ENCODE measurements at regions of chr1 and their contacts with region 1.

Region 1: DNA sequence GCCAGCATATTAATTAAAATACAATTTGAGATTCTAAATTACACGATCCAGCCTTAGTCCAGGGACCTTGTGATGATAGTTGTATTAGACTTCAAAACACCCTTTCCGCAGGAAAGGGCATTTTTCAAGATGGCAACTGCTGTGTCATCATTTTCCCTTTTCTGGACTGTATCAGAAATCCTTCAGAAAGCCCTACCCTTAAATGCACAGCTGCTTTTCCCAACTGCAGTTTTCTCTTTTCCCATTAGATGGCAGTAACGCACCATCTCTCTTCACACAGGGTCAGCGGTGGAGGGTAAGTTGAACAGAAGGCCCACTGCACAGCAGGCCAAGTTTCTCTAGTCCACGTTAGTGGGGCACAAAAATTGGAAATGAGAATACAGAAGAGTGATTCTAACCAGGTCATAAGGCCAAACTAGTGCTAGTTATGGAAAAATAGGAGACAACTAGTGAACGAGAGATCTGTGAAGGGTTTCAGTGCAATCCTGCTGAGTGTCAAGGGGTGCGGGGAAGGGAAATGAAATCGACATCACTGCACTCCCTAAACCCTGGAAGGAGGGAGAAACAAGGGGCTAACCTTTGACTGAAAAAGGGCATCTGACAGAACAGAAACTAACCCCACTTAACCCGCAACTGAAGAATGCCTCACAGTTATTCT is 22.1 kb upstream of the TDRD10 start:
- DNase-seq: peak; percentile 66 to 86
- H3K4me3 ChIP-seq: no peak overlapping the region
- H3K4me3 Mint-ChIP-seq: no peak overlapping the region
- H3K27ac Mint-ChIP-seq: no peak overlapping the region
- H3K4me1 ChIP-seq: no peaks in the 10 kb centered on the region
- H3K4me1 Mint-ChIP-seq: no peaks in the 10 kb centered on the region
- H3K27me3 ChIP-seq: no peaks in the 10 kb centered on the region
- H3K27me3 Mint-ChIP-seq: no peaks in the 10 kb centered on the region
- CTCF ChIP-seq: peak; percentile 78 to 85

Region 2: DNA sequence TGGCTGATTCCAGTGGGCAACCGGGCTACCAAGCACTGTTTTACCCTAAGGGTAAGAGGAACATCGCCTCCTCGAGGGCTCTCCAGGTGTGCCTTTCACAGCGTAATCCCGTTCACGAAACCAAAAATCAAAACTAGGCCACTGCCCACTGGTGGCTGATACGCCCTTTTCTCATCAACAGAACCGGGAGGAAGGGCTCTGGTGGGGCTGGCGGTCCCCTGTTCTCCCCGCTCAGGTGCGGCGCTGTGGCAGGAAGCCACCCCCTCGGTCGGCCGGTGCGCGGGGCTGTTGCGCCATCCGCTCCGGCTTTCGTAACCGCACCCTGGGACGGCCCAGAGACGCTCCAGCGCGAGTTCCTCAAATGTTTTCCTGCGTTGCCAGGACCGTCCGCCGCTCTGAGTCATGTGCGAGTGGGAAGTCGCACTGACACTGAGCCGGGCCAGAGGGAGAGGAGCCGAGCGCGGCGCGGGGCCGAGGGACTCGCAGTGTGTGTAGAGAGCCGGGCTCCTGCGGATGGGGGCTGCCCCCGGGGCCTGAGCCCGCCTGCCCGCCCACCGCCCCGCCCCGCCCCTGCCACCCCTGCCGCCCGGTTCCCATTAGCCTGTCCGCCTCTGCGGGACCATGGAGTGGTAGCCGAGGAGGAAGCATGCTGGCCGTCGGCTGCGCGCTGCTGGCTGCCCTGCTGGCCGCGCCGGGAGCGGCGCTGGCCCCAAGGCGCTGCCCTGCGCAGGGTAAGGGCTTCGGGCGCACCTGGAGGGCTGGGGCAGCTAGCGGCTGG is 74.7 kb before region 1 on chr1 and contains the start of gene IL6R:
- CTCF ChIA-PET with region 1: interaction called, 7 read pairs
- POLR2A ChIA-PET with region 1: no interaction called
- intact Hi-C with region 1: loop called (anchors 1 kb)
- DNase-seq: peak; percentile 81 to 87
- H3K4me3 ChIP-seq: peak within 1 kb of the TSS; percentile 61
- H3K4me3 Mint-ChIP-seq: peak within 1 kb of the TSS; percentile 85
- H3K27ac Mint-ChIP-seq: peak within 1 kb of the TSS; percentile 79
- H3K4me1 ChIP-seq: peaks cover 14% of the 10 kb centered on the region
- H3K4me1 Mint-ChIP-seq: no peaks in the 10 kb centered on the region
- H3K27me3 ChIP-seq: no peaks in the 10 kb centered on the region
- H3K27me3 Mint-ChIP-seq: no peaks in the 10 kb centered on the region
- CTCF ChIP-seq: peak in 1 of 2 experiments; percentile 68
- total RNA-seq, gene IL6R: 4.9 and 5.8 TPM in 2 replicates

Region 3: DNA sequence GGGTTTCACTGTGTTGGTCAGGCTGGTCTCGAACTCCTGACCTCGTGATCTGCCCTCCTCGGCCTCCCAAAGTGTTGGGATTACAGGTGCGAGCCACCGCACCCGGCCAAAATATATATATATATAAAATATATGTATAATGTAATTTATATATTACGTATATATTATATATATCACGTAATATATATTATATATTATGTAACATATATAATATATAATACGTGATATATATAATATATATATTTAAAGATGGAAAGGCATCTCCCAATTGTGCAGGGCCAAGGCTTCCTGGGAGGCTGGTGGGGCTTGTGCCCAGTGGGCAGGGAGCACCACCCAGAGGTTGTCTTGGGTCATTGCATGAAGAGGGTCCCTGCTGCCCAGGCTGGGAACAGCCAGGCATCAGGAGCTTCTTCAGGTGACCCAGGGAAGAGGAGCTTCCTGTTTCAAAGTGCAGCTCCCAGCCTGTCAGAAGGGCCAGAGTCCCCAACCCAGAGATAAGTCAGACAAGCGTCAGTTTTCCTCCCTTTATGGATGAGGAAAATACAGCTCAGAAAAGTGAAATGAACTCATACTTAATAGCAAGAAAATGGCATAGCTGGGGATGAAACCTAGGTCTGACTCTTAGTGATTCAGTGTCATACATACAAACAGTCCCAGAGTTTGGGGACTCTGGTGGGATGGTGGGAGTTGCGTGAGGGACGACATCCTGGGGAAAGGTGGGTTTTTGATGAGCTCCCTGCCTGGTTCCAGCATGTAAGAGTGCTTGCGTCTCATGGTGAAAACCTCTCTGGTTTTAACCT is 66.6 kb after region 1 on chr1:
- CTCF ChIA-PET with region 1: interaction called, 44 read pairs
- POLR2A ChIA-PET with region 1: no interaction called
- intact Hi-C with region 1: loop called (anchors 1 kb)
- DNase-seq: peak; percentile 73 to 80
- H3K4me3 ChIP-seq: no peak overlapping the region
- H3K4me3 Mint-ChIP-seq: no peak overlapping the region
- H3K27ac Mint-ChIP-seq: no peak overlapping the region
- H3K4me1 ChIP-seq: no peaks in the 10 kb centered on the region
- H3K4me1 Mint-ChIP-seq: peaks cover 9% of the 10 kb centered on the region
- H3K27me3 ChIP-seq: no peaks in the 10 kb centered on the region
- H3K27me3 Mint-ChIP-seq: peaks cover 7% of the 10 kb centered on the region
- CTCF ChIP-seq: peak; percentile 70 to 83

Region 4: DNA sequence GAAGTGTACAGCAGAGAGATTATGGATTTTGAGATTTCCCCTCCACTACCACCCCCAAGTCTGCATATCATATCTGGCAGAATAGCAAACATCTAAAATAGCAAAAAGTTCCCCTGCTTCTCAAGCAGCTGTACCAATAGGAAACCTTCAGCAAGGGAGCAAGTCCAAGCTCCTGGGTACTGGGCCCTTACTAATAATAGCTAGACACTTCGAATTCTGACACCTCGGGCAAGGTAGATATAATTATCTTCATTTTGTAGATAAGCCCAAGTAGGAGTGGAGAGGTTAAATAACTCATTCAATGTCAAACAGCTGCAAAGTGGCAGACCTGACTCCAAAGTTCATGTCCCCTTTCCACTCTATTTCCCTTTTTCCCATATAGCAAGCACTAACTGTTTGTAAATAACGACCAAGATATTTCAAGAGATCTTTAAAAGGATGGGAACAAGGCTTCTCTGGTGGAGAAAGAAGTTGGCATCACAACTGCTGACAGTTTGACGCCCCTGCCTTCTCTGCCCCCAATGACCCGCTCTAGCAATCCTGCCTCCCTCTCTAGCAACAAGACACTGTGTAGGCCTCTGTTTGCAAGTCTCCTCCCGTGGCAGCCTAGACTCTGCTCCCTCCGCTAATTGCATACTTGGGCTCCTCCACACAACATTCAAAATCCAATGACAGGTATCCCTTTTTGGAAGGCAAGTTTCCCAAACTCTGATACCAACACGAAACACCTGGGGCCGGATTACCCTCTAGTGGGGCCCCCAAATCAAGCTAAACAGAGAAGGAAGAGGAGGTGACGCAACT is 146.8 kb after region 1 on chr1:
- CTCF ChIA-PET with region 1: no interaction called
- POLR2A ChIA-PET with region 1: no interaction called
- intact Hi-C with region 1: no loop called
- DNase-seq: no peak
- H3K4me3 ChIP-seq: peak overlapping the region; percentile 99
- H3K4me3 Mint-ChIP-seq: peak overlapping the region; percentile 85
- H3K27ac Mint-ChIP-seq: peak overlapping the region; percentile 84
- H3K4me1 ChIP-seq: peaks cover 12% of the 10 kb centered on the region; the same call in 1 of the 2 replicates
- H3K4me1 Mint-ChIP-seq: peaks cover 18% of the 10 kb centered on the region
- H3K27me3 ChIP-seq: no peaks in the 10 kb centered on the region
- H3K27me3 Mint-ChIP-seq: no peaks in the 10 kb centered on the region
- CTCF ChIP-seq: no peak

Region 5: GRCh38 chr1:154747740-154748404 is 268.0 kb after region 1 on chr1:
- CTCF ChIA-PET with region 1: no interaction called
- POLR2A ChIA-PET with region 1: no interaction called
- intact Hi-C with region 1: loop called (anchors 10 kb)
- DNase-seq: no peak
- H3K4me3 ChIP-seq: no peak overlapping the region
- H3K4me3 Mint-ChIP-seq: no peak overlapping the region
- H3K27ac Mint-ChIP-seq: no peak overlapping the region
- H3K4me1 ChIP-seq: no peaks in the 10 kb centered on the region
- H3K4me1 Mint-ChIP-seq: no peaks in the 10 kb centered on the region
- H3K27me3 ChIP-seq: peaks cover 3% of the 10 kb centered on the region
- H3K27me3 Mint-ChIP-seq: peaks cover 38% of the 10 kb centered on the region
- CTCF ChIP-seq: no peak

Measured in Caco-2 (cell line).